Activated naive CD4-positive, alpha-beta T cell treated with anti-CD3 and anti-CD28 coated beads for 36 hours (primary cell): ENCODE measurements at regions of chr1 and their contacts with region 1.

Region 1: DNA sequence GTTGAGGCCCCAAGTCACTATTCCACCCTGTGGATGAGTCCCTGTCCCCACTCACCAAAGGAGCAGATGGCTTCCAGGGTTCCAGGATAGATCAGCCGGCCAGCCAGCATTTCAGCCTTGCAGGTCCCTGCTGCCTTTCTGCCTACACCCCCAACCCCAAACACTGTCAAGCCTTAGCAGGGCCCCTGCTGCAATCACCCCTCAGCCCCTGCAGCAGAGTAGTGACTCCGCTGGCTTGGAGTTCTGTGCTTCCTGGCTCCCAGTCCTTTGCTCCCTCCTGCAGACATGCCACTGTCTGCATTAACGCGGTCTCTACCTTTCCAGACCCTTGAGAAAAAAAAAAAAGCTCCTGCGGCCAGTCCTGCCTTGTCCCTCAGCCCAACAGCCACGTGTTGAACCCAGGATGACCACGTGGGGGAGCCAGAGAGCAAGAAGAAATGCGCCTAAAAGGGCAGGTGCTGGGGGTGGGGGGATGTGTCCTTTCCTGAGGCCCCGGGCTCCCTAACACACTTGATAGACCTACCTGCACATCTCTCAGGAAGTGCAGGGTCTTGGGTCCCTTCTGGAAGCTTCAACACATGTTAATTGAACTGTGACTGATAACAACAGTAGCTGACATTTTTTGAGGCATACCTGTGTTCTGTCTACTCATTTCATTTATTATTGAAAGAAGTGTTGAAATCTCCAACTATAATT is 37.4 kb downstream of the RASSF5 start:
- DNase-seq: peak; percentile 89
- H3K4me3 Mint-ChIP-seq: no peak overlapping the region
- H3K27ac Mint-ChIP-seq: peak overlapping the region; percentile 70
- H3K4me1 Mint-ChIP-seq: peaks cover 19% of the 10 kb centered on the region
- H3K27me3 Mint-ChIP-seq: no peaks in the 10 kb centered on the region

Region 2: GRCh38 chr1:205840146-205840923 is 704.4 kb before region 1 on chr1:
- CTCF ChIA-PET with region 1: no interaction called
- intact Hi-C with region 1: no loop called
- DNase-seq: no peak
- H3K4me3 Mint-ChIP-seq: no peak overlapping the region
- H3K27ac Mint-ChIP-seq: no peak overlapping the region
- H3K4me1 Mint-ChIP-seq: no peaks in the 10 kb centered on the region
- H3K27me3 Mint-ChIP-seq: no peaks in the 10 kb centered on the region

Region 3: DNA sequence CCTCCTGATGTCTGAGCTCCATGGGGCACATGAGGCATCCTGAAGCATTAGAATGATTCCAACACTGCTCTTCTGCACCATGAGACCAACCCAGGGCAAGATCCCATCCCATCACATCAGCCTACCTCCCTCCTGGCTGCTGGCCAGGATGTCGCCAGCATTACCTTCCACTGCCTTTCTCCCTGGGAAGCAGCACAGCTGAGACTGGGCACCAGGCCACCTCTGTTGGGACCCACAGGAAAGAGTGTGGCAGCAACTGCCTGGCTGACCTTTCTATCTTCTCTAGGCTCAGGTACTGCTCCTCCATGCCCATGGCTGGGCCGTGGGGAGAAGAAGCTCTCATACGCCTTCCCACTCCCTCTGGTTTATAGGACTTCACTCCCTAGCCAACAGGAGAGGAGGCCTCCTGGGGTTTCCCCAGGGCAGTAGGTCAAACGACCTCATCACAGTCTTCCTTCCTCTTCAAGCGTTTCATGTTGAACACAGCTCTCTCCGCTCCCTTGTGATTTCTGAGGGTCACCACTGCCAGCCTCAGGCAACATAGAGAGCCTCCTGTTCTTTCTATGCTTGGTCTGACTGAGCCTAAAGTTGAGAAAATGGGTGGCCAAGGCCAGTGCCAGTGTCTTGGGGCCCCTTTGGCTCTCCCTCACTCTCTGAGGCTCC is 48.4 kb before region 1 on chr1:
- CTCF ChIA-PET with region 1: interaction called, 13 read pairs
- intact Hi-C with region 1: loop called (anchors 2 kb)
- DNase-seq: no peak
- H3K4me3 Mint-ChIP-seq: no peak overlapping the region
- H3K27ac Mint-ChIP-seq: peak overlapping the region; percentile 21
- H3K4me1 Mint-ChIP-seq: peaks cover 11% of the 10 kb centered on the region
- H3K27me3 Mint-ChIP-seq: no peaks in the 10 kb centered on the region

Region 4: DNA sequence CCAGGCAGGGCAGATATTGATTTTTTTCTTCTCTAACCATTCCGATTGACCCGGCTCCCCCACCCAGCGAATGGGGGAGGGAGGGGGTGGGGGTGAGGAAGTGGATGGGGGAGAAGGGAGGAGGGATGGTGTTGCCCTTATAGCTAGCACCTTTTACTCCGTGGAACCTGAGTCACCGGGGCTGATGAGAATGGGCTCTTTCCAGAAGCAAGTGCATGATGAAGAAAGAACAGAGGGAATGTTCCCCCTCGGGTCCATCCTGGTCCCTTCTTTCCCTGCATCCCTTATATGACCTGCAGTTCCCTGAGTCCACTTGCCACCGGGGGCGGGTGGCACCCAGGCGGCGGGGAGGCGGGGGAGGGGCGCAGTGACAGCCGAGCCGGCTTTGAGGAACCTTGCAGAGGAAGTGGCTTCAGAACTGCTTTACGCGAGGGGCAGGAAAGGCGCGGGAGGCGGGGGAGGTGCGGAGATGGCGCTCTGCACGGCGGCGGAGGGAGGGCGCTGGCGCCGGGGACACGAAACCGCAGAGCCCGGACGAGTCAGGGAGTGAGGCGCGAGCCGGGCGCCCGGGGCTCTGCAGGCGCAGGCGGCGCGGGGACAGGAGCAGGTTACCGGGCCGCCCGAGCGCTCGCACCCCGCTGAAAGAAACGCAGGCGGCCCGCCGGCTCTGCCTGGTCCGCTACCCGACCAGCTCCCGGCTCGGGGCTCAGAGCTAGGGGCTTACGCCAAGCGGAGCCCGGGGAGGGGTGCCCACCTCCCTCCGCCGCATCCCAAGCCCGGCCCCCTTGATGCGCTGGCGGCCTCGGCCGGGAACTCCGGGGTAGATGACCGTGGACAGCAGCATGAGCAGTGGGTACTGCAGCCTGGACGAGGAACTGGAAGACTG is 12.3 kb after region 1 on chr1:
- CTCF ChIA-PET with region 1: interaction called, 78 read pairs
- intact Hi-C with region 1: loop called (anchors 1 kb)
- DNase-seq: peak; percentile 92
- H3K4me3 Mint-ChIP-seq: peak overlapping the region; percentile 96
- H3K27ac Mint-ChIP-seq: peak overlapping the region; percentile 100
- H3K4me1 Mint-ChIP-seq: peaks cover 61% of the 10 kb centered on the region
- H3K27me3 Mint-ChIP-seq: no peaks in the 10 kb centered on the region

Region 5: GRCh38 chr1:206573319-206573718 is 28.6 kb after region 1 on chr1:
- CTCF ChIA-PET with region 1: interaction called, 511 read pairs
- intact Hi-C with region 1: no loop called
- DNase-seq: no peak
- H3K4me3 Mint-ChIP-seq: peak overlapping the region; percentile 3
- H3K27ac Mint-ChIP-seq: peak overlapping the region; percentile 100
- H3K4me1 Mint-ChIP-seq: peaks cover 96% of the 10 kb centered on the region
- H3K27me3 Mint-ChIP-seq: no peaks in the 10 kb centered on the region

Region 6: GRCh38 chr1:206612129-206612876 is 67.6 kb after region 1 on chr1 and contains the start of gene EIF2D:
- CTCF ChIA-PET with region 1: interaction called, 7 read pairs
- intact Hi-C with region 1: loop called (anchors 2 kb)
- DNase-seq: peak; percentile 95
- H3K4me3 Mint-ChIP-seq: peak within 1 kb of the TSS; percentile 92
- H3K27ac Mint-ChIP-seq: peak within 1 kb of the TSS; percentile 99
- H3K4me1 Mint-ChIP-seq: peaks cover 44% of the 10 kb centered on the region
- H3K27me3 Mint-ChIP-seq: no peaks in the 10 kb centered on the region
- total RNA-seq, gene EIF2D: 116 to 122 TPM